ENCODE measurements at regions of chr18 and their contacts with region 1.

Region 1: DNA sequence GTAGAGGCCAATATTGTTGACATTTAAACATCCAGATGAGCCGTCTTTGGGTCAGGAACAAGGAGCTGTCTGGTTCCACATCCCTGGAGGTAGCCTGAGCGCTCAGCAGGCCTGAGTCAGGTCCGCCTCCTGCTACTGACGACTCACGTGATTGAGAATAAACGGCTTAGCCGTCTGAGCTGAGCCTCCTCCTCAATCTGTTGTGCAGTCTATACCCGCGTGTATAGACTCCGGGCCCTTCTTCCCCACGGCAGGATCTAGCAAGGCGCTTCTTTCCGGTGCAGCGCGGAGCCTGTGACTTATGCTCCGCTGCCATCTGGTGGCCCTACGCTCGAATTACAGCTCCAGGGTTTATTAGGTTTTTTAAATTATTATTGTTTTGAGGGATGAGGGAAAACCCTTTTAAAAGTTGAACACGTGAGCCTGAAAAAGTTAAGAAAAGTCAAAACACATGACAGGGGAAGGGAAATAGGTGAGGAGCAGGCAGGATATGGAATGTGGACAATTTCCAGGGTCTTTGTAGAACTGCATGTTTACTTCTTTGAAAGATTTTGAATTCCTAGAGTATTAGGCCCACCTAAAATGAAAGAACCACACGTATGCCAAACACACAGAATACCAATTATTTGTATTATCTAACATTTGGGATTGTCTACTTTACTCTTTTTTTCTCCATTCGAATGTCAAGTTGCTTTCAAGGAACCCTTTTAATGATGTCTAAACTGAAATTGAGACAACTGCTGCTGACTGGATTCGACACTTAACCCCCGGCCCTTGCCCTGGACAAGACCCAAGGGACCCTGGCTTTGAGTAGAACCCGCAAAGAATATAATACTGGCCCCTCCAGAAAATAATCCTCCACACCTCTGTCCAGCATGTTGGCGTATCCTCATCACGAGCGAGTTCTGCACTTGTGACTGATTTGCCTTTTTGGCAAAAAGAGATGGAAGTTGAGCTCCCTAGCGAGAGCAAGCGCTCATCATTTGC is 112.4 kb upstream of the ZNF236 start:
- DNase-seq: no peak
- H3K4me3 ChIP-seq: no peak overlapping the region
- CTCF ChIP-seq: peak; percentile 76

Region 2: GRCh38 chr18:76380791-76381405 is 329.1 kb before region 1 on chr18:
- CTCF ChIA-PET with region 1: interaction called, 20 read pairs
- POLR2A ChIA-PET with region 1: no interaction called
- DNase-seq: no peak
- H3K4me3 ChIP-seq: no peak overlapping the region
- CTCF ChIP-seq: peak; percentile 74

Region 3: DNA sequence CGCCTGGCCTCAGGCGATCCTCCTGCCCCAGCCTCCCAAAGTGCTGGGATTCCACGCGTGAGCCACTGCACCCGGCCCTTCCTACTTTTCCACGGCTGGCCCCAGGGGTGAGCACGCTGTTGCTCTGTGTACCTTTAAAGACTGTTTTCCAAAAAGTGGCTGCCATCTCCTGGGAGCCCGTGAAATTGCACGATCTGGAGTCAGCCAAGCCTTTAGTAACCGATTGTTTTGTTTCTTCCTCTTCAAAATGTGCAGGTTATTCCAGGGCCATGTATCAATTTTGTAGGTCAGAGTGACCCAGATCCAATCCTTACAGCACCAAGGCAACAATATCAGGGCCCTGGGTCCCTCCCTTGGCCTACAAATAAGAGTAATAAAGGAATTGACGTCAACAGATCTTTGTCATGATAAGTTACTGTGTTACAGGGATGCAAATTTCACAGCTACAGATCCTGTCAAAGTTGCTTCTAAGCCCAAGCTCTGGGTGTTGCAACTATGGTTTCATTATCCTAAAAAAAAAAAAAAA is 23.2 kb before region 1 on chr18:
- CTCF ChIA-PET with region 1: interaction called, 10 read pairs
- POLR2A ChIA-PET with region 1: no interaction called
- DNase-seq: no peak
- H3K4me3 ChIP-seq: no peak overlapping the region
- CTCF ChIP-seq: peak; percentile 73

Region 4: GRCh38 chr18:76721207-76721996 is 11.4 kb after region 1 on chr18:
- CTCF ChIA-PET with region 1: interaction called, 16 read pairs
- POLR2A ChIA-PET with region 1: no interaction called
- DNase-seq: no peak
- H3K4me3 ChIP-seq: no peak overlapping the region
- CTCF ChIP-seq: no peak